ENCODE measurements at regions of chr17 and their contacts with region 1.

Region 1: DNA sequence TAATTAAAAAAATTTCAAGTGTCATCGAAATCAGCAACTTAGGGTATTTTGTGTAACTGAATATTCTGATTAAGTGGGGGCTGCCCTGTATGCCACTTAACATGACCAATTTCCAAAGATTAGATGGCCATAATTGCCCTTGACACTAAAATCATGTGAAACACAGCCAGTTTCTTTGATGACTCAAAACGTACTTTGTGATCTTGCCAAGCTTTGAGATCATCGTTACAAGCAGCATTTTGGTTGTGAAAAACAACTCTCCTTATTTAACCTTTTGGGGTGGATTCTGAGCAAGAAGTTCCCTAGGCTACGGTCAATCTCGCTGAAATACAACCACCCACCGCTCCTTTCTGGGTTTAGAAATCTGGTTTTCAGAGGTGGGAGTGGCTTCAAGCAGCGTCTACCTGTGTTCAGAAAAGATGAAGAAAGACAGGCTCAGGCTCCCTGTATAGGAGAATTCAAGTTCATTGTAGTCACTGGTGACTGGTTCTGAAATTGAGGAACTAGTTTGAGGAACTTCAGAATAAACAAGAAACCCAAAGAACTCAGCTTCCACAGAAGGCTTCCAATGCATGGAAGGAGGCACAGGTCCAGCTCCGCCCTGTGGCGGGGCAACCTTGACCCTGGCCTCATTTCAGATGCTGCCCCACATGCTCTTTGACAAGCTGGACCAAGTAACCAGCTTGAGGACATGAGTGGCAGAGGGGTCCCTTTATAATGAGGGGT is 9.4 kb downstream of the MAP3K14 start:
- DNase-seq: peak; percentile 78
- ATAC-seq: peak; percentile 56
- H3K4me3 Mint-ChIP-seq: peak overlapping the region; percentile 44
- H3K27ac Mint-ChIP-seq: peak overlapping the region; percentile 97
- H3K4me1 Mint-ChIP-seq: peaks cover 89% of the 10 kb centered on the region
- H3K27me3 Mint-ChIP-seq: no peaks in the 10 kb centered on the region

Region 2: DNA sequence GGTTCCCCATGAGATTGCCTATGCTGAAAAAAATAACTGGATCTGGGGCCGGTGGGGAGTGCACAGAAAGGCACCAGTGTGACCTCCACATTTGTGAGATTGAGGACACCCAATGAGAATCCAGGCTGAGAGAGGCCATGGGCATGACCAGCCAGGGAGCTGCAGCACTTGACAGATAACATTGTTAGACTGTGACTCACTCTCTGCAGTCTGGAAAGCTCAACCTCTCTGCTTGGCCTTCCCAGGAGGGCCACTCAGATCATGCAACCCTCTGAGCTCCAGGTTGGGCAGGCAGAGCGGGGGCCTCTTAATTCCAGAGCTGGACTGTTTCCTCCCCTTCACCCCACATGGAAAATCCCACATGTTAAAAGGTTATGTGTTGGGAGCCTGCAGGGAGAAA is 720.1 kb before region 1 on chr17:
- CTCF ChIA-PET with region 1: no interaction called
- POLR2A ChIA-PET with region 1: no interaction called
- intact Hi-C with region 1: no loop called
- DNase-seq: no peak
- ATAC-seq: no peak
- H3K4me3 Mint-ChIP-seq: no peak overlapping the region
- H3K27ac Mint-ChIP-seq: no peak overlapping the region
- H3K4me1 Mint-ChIP-seq: no peaks in the 10 kb centered on the region
- H3K27me3 Mint-ChIP-seq: peaks cover 5% of the 10 kb centered on the region

Region 3: DNA sequence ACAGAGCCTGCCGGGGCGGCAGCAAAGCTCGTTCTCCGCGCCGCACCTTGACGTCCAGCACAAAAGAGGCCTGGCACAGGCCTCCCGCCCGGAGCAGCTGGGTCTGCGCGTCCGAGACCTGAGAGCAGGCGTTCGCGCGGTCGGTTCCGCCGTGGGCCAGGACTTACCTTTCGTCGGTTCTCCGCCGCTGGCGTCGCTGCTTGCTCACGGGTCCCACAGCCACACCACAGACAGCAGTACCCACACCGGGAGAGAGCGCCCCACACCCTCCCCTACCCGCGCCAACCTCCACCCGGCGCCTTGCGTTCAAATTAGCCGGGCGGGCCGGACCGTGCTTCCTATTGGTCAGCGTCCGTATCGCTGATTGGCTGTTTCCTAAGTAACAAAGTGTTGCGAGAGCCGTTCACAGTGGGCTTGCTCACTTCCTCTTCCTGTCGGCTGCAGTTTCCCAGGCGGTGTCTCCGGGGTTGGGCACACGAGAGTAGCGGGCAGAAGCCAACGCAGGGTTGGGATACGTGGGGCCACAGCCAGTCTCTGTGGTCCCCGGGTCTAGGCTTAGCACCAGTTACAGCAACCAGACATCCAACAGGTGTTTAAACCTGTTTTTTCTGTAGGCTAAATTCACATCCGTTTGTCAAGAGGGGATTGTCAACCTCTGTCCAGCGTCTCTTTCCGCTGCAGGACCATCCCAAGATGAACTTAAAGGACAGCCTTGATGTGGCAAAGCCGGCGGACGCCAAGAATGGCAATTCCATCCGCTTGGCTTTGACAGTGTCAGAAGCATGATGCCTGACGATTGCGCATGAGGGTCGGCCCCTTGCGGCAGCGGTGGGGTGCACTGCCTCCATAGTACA is 359.8 kb before region 1 on chr17 and contains the start of gene KIF18B:
- CTCF ChIA-PET with region 1: no interaction called
- POLR2A ChIA-PET with region 1: no interaction called
- intact Hi-C with region 1: no loop called
- DNase-seq: peak; percentile 96
- ATAC-seq: peak; percentile 98
- H3K4me3 Mint-ChIP-seq: peak within 1 kb of the TSS; percentile 90
- H3K27ac Mint-ChIP-seq: peak within 1 kb of the TSS; percentile 88
- H3K4me1 Mint-ChIP-seq: peaks cover 4% of the 10 kb centered on the region
- H3K27me3 Mint-ChIP-seq: no peaks in the 10 kb centered on the region
- total RNA-seq, gene KIF18B: 38.9 to 48.7 TPM

Region 4: DNA sequence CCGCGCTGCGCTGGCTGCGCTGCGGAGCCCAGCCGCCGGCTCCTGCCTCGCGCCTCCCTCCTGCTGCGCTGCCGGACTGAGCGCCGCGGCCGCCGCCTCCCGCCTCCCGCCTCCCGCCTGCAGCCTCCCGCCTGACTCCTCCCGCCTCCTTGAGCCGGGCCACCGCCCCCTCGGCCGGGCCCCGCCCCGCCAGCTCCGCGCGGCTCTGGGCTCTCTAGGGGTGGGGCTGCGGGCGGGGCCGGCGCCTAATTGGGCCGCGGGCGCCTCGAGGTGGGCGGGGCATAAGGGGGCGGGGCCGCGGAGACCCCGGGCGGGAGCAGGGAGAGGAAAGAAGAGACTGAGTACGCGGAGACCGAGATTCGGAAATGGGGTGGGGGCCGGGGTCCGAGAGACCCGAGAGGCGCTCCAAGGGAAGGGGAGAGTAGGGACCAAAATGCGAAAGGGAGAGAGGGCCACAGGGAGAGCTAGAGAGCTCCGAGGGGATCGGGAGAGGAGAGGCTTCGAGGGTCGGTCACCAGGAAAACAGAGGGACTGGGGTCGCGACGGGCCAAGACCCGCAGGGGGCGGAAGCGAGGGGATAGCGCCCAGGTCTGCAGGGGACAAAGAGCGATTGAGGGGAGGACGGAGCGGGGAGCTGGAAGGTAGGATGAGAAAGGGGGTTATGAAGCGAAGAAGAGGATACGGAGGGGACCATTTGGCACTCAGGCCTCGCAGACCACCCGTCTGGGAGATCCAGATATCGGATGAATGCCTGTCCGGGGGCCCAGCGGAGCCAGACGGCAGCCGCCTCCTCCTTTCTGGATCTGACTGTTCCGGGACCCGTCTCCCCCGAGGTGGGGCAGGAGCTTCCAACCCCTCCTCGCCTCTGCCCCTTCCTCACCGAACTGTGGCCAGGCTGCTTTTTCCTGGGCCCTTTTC is 339.0 kb before region 1 on chr17 and contains the start of gene C1QL1:
- CTCF ChIA-PET with region 1: no interaction called
- POLR2A ChIA-PET with region 1: no interaction called
- intact Hi-C with region 1: loop called in 1 of 2 experiments (anchors 2 kb)
- DNase-seq: peak; percentile 93
- ATAC-seq: peak; percentile 79
- H3K4me3 Mint-ChIP-seq: peak within 1 kb of the TSS; percentile 64
- H3K27ac Mint-ChIP-seq: no peak within 1 kb of the TSS
- H3K4me1 Mint-ChIP-seq: peaks cover 44% of the 10 kb centered on the region
- H3K27me3 Mint-ChIP-seq: peaks cover 41% of the 10 kb centered on the region
- total RNA-seq, gene C1QL1: 0.37 to 0.83 TPM

Region 5: GRCh38 chr17:45228763-45229539 is 78.5 kb before region 1 on chr17:
- CTCF ChIA-PET with region 1: interaction called, 13 read pairs
- POLR2A ChIA-PET with region 1: interaction called, 86 read pairs
- intact Hi-C with region 1: loop called (anchors 1 kb)
- DNase-seq: peak; percentile 93
- ATAC-seq: peak; percentile 37
- H3K4me3 Mint-ChIP-seq: peak overlapping the region; percentile 94
- H3K27ac Mint-ChIP-seq: peak overlapping the region; percentile 100
- H3K4me1 Mint-ChIP-seq: peaks cover 82% of the 10 kb centered on the region
- H3K27me3 Mint-ChIP-seq: no peaks in the 10 kb centered on the region

Region 6: DNA sequence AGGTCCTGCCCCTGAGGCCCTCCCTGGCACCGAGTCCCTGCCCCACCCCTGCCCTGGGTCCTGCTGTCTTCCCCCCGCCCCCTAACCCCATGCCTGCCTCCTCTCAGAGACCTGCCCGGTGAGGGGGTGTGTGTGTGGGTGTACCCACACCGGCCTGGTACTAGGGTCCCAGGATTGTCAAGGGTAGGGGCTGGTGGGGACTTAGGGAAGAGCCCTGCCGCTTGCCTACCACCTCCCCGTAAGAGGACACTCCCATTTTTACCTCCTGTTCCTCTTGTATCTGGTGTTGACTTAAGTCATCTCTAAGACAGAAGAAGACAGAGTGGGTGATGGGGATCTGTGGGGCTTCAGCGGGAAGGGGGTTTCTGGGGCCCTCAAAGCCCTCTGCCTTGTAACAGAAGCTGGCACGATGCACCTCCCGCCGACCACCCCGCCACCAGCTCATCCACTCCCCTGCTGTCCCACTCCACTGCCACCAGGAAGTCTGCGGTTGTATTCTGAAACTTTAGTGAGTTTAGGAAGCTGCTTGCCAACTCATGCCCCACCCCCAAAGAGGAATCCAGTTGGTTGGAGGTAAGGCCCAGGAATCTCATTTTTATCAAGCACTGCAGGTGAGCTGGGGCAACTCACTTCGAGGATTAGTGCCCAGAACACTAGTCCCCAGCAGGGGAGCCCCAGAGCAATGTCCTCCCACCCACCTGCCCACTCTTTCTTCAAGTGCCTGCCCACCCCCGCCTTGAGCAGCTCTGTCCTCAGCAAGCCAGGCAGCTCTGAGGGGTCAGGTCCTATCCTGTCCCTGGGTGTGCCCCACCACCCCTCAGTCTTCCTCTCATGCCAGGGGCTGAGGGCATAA is 51.1 kb before region 1 on chr17:
- CTCF ChIA-PET with region 1: no interaction called
- POLR2A ChIA-PET with region 1: interaction called, 11 read pairs
- intact Hi-C with region 1: no loop called
- DNase-seq: no peak
- ATAC-seq: peak; percentile 56
- H3K4me3 Mint-ChIP-seq: no peak overlapping the region
- H3K27ac Mint-ChIP-seq: peak overlapping the region; percentile 43
- H3K4me1 Mint-ChIP-seq: peaks cover 57% of the 10 kb centered on the region
- H3K27me3 Mint-ChIP-seq: no peaks in the 10 kb centered on the region

Region 7: GRCh38 chr17:45357364-45357997 is 50.0 kb after region 1 on chr17:
- CTCF ChIA-PET with region 1: interaction called, 6 read pairs
- POLR2A ChIA-PET with region 1: interaction called, 13 read pairs
- intact Hi-C with region 1: loop called (anchors 1 kb)
- DNase-seq: no peak
- ATAC-seq: peak; percentile 68
- H3K4me3 Mint-ChIP-seq: no peak overlapping the region
- H3K27ac Mint-ChIP-seq: no peak overlapping the region
- H3K4me1 Mint-ChIP-seq: peaks cover 35% of the 10 kb centered on the region
- H3K27me3 Mint-ChIP-seq: peaks cover 17% of the 10 kb centered on the region

Region 8: DNA sequence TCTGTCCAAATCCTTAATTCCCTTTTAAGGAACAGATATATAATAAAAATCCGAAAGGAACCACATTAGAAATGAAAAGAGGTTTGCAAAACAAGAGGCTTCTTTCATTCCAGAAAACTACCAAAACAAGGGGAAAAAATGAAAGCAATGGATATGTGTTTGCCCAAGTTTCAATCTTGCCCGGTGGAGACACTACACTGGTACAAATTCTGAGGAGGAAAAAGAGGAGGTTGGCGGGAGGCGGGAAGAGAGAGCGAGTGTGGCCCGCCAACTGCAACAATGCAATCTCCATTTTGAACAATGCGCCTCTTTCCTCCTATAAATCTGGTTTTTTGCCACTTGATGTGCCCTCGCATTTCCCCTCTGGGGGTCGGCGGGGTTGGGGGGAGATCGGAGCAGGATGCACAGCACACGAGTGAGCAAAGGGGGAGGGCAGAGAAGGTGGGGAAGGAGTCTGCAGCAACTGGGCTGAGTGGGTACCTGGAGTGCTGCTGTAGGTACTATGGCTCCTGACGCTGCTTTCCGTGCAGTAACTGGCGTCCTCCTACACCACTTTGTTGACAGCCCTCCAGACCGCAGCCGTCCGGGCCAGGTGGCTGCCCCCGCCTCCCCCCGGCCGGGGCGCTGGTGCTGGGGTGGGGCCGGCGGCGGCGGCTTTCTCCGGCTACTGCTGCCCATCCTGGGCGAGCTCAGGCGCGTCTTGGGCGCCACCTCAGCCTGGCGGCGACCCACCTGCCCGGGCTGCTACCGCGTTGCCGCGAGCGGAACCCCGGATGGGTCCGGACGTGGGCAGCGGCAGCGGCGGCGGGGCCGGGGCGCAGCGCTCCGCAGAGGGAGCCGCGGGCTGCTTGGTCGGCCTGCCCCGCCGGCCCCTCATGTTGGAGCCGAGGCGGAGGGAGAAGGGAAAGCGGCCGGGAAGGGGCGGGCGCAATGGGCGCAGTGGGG is 276.9 kb after region 1 on chr17:
- CTCF ChIA-PET with region 1: no interaction called
- POLR2A ChIA-PET with region 1: no interaction called
- intact Hi-C with region 1: loop called in 1 of 2 experiments (anchors 5 kb)
- DNase-seq: peak; percentile 78
- ATAC-seq: peak; percentile 48
- H3K4me3 Mint-ChIP-seq: peak overlapping the region; percentile 90
- H3K27ac Mint-ChIP-seq: peak overlapping the region; percentile 94
- H3K4me1 Mint-ChIP-seq: peaks cover 24% of the 10 kb centered on the region
- H3K27me3 Mint-ChIP-seq: no peaks in the 10 kb centered on the region

Measured in activated CD4-positive, alpha-beta T cell treated with anti-CD3 and anti-CD28 coated beads for 36 hours (primary cell).